Dorsolateral prefrontal cortex (tissue), 120 donors: ENCODE measurements at regions of chr4 and their contacts with region 1.

Region 1: DNA sequence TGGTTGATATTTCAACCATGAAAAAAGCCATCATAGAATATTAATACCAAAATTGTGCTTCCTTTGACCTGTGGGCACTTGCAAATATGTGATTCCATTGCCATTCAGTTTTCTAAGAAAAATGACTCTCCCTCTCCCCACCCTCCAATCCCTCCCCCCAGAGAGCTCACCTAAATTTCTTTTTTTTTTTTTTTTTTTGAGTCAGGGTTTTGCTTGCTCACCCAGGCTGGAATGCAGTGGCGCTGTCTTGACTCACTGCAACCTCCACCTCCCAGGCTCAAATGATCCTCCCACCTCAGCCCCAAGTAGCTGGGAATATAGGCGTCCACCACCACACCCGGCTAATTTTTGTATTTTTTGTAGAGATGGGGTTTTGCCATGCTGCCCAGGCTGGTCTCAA is 47.0 kb downstream of the SNX25 start:
- DNase-seq: no peak
- H3K4me3 ChIP-seq: no peak overlapping the region
- H3K27ac ChIP-seq: no peak overlapping the region
- H3K27me3 ChIP-seq: no peaks in the 10 kb centered on the region
- CTCF ChIP-seq: no peak

Region 2: DNA sequence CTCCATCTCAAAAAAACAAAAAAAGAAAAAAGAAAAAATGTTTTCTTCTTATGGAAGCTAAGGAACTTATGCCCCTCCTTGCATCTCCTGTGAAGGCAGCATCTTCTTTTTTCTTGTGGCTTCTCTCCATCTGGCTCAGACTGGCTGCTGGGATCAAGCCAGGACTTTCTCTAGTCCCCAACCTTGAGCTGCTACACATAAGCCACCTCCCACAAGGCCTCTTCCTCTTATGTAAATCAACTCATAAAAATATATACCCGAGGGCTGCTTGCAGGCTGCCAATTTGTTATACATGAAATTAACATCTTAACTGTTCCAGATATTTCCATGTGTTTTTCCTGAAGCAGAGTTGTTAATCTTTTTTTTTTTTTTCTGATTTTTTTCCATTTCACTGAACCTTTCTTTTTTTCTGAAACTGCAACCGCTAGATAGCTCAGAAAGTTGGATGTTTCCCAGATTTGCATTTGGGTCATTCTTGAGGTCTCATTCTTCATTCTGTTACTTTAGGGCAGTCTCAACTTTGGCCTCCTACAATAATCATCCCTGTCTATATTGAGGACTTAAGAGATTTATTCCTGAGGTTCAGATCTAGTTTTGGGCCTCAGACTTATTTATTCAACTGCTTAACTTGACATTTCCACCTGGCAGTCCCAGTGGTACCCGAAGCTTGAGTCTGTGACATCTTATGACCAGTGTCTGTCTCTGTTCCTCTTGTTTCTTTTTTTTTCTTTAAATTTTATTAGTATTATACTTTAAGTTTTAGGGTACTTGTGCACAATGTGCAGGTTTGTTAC is 36.7 kb before region 1 on chr4:
- intact Hi-C with region 1: loop called in 1 of 2 experiments (anchors 5 kb)
- DNase-seq: peak in 3 of 10 donors; percentile 51 to 65 (median 54)
- H3K4me3 ChIP-seq: no peak overlapping the region
- H3K27ac ChIP-seq: peak overlapping the region in 5 of 59 donors; percentile 12 to 62 (median 34)
- H3K27me3 ChIP-seq: no peaks in the 10 kb centered on the region
- CTCF ChIP-seq: no peak

Region 3: DNA sequence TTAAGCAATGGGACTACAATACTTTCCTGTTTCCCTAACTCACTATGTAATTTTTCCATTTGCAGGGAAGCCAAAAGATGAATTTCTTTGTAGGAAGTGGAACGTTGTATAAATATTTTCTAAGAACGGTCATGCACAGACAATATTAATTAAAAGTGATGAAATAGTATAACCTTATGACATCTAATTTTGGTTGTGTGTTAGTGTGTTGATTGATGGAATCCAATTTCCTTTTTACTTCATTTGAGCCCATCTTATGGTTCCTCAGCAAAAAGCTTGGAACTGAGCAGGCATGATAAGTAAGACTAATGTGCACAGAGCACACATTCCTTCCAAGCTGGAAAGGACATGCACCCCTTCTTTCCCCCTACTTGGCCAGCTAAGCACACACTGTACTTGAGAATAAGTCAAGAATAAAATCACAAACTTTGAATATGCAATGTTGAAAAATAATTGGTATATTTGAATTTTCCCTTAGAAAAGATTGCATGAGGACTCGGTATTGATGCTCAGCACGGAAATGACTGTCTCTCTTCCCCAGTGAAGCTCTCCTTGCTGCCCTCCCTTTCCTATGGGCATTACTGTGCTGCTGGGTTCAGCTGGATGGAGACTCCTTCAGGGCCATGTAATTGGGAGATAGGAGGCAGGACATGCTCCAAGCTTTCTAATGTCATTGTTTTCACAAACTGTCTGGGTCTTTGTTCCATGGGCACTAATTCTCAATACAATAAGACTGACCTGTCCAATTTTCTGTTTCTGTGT is 298.1 kb after region 1 on chr4:
- intact Hi-C with region 1: no loop called
- DNase-seq: no peak
- H3K4me3 ChIP-seq: no peak overlapping the region
- H3K27ac ChIP-seq: no peak overlapping the region
- H3K27me3 ChIP-seq: no peaks in the 10 kb centered on the region
- CTCF ChIP-seq: no peak